ENCODE measurements at regions of chr6 and their contacts with region 1.

Region 1: GRCh38 chr6:134288538-134289203 is 29.2 kb downstream of the SGK1 start:
- DNase-seq: no peak
- ATAC-seq: peak in 3 of 4 experiments; percentile 43 to 69 (median 45)
- H3K4me3 ChIP-seq: no peak overlapping the region
- H3K4me3 Mint-ChIP-seq: peak overlapping the region in 2 of 3 donors; percentile 1 to 38
- H3K27ac ChIP-seq: no peak overlapping the region
- H3K27ac Mint-ChIP-seq: peak overlapping the region; percentile 20 to 36
- H3K4me1 ChIP-seq: peaks cover 0 to 15% of the 10 kb centered on the region in 2 experiments
- H3K4me1 Mint-ChIP-seq: peaks cover 17 to 23% (median 21%) of the 10 kb centered on the region in 3 donors
- H3K27me3 ChIP-seq: no peaks in the 10 kb centered on the region
- H3K27me3 Mint-ChIP-seq: no peaks in the 10 kb centered on the region

Region 2: DNA sequence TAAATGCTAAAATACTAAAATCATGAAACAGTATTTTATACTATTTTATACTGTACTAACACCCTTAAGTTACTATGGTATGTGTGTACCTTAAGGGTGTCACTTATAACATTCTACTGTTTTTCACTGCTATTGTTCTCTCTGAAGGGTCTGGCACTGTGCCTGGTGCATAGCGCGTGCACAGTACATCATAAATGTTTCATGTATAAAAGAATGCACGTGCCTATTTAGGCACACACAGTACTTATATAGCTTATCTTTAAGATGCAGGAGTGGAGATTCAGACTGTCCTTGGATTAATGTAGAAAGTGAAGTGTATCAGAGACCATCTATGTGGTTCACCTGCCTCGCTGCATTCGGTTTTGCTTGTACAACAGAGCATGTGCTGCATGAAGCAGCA is 93.3 kb after region 1 on chr6:
- CTCF ChIA-PET with region 1: interaction called in 1 of 2 experiments, 4 read pairs
- POLR2A ChIA-PET with region 1: interaction called in 1 of 2 experiments, 11 read pairs
- DNase-seq: no peak
- ATAC-seq: no peak
- H3K4me3 ChIP-seq: no peak overlapping the region
- H3K4me3 Mint-ChIP-seq: no peak overlapping the region
- H3K27ac ChIP-seq: no peak overlapping the region
- H3K27ac Mint-ChIP-seq: no peak overlapping the region
- H3K4me1 ChIP-seq: peaks cover 12 to 16% of the 10 kb centered on the region in 2 experiments
- H3K4me1 Mint-ChIP-seq: peaks cover 23 to 36% (median 24%) of the 10 kb centered on the region in 3 donors
- H3K27me3 ChIP-seq: no peaks in the 10 kb centered on the region
- H3K27me3 Mint-ChIP-seq: no peaks in the 10 kb centered on the region